Activated CD8-positive, alpha-beta T cell treated with anti-CD3 and anti-CD28 coated beads, Interleukin-2, amount 10 ng/mL, durations not matched to agents 7 days and 5 days (primary cell): ENCODE measurements at regions of chr1 and their contacts with region 1.

Region 1: GRCh38 chr1:39609618-39610331 is 29.7 kb downstream of the HEYL start:
- DNase-seq: peak; percentile 72
- ATAC-seq: peak; percentile 90
- H3K4me3 Mint-ChIP-seq: no peak overlapping the region
- H3K27ac Mint-ChIP-seq: no peak overlapping the region
- H3K4me1 Mint-ChIP-seq: peaks cover 8% of the 10 kb centered on the region
- H3K27me3 Mint-ChIP-seq: peaks cover 12% of the 10 kb centered on the region

Region 2: DNA sequence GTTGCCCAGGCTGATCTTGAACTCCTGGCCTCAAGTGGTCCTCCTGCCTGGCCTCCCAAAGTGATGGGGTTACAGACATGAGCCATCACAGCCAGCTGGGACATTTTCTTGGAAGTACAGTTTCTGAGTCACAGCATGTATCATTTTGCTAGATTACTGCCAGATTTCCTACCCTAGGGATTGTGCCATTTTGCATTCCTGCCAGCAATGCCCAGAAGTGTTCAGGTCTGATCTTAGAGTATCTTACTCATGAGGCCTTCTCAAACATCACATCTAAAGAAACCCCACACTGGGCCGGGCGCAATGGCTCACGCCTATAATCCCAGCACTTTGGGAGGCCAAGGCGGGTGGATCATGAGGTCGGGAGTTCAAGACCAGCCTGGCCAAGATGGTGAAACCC is 108.1 kb before region 1 on chr1:
- CTCF ChIA-PET with region 1: no interaction called
- POLR2A ChIA-PET with region 1: no interaction called
- DNase-seq: no peak
- ATAC-seq: no peak
- H3K4me3 Mint-ChIP-seq: no peak overlapping the region
- H3K27ac Mint-ChIP-seq: no peak overlapping the region
- H3K4me1 Mint-ChIP-seq: no peaks in the 10 kb centered on the region
- H3K27me3 Mint-ChIP-seq: peaks cover 20% of the 10 kb centered on the region

Region 3: GRCh38 chr1:39575191-39576015 is 34.4 kb before region 1 on chr1:
- CTCF ChIA-PET with region 1: interaction called, 17 read pairs
- POLR2A ChIA-PET with region 1: no interaction called
- DNase-seq: peak; percentile 63
- ATAC-seq: peak; percentile 36
- H3K4me3 Mint-ChIP-seq: peak overlapping the region; percentile 92
- H3K27ac Mint-ChIP-seq: peak overlapping the region; percentile 89
- H3K4me1 Mint-ChIP-seq: peaks cover 45% of the 10 kb centered on the region
- H3K27me3 Mint-ChIP-seq: no peaks in the 10 kb centered on the region

Region 4: GRCh38 chr1:39646232-39647081 is 36.7 kb after region 1 on chr1:
- CTCF ChIA-PET with region 1: interaction called, 295 read pairs
- POLR2A ChIA-PET with region 1: no interaction called
- DNase-seq: no peak
- ATAC-seq: no peak
- H3K4me3 Mint-ChIP-seq: no peak overlapping the region
- H3K27ac Mint-ChIP-seq: no peak overlapping the region
- H3K4me1 Mint-ChIP-seq: no peaks in the 10 kb centered on the region
- H3K27me3 Mint-ChIP-seq: peaks cover 7% of the 10 kb centered on the region

Region 5: GRCh38 chr1:39672551-39672947 is 62.8 kb after region 1 on chr1:
- CTCF ChIA-PET with region 1: interaction called, 35 read pairs
- POLR2A ChIA-PET with region 1: no interaction called
- DNase-seq: peak; percentile 35
- ATAC-seq: peak; percentile 23
- H3K4me3 Mint-ChIP-seq: peak overlapping the region; percentile 34
- H3K27ac Mint-ChIP-seq: no peak overlapping the region
- H3K4me1 Mint-ChIP-seq: peaks cover 11% of the 10 kb centered on the region
- H3K27me3 Mint-ChIP-seq: peaks cover 33% of the 10 kb centered on the region

Region 6: GRCh38 chr1:39720094-39720999 is 110.6 kb after region 1 on chr1:
- CTCF ChIA-PET with region 1: interaction called, 17 read pairs
- POLR2A ChIA-PET with region 1: no interaction called
- DNase-seq: no peak
- ATAC-seq: peak; percentile 67
- H3K4me3 Mint-ChIP-seq: no peak overlapping the region
- H3K27ac Mint-ChIP-seq: no peak overlapping the region
- H3K4me1 Mint-ChIP-seq: no peaks in the 10 kb centered on the region
- H3K27me3 Mint-ChIP-seq: peaks cover 53% of the 10 kb centered on the region

Region 7: DNA sequence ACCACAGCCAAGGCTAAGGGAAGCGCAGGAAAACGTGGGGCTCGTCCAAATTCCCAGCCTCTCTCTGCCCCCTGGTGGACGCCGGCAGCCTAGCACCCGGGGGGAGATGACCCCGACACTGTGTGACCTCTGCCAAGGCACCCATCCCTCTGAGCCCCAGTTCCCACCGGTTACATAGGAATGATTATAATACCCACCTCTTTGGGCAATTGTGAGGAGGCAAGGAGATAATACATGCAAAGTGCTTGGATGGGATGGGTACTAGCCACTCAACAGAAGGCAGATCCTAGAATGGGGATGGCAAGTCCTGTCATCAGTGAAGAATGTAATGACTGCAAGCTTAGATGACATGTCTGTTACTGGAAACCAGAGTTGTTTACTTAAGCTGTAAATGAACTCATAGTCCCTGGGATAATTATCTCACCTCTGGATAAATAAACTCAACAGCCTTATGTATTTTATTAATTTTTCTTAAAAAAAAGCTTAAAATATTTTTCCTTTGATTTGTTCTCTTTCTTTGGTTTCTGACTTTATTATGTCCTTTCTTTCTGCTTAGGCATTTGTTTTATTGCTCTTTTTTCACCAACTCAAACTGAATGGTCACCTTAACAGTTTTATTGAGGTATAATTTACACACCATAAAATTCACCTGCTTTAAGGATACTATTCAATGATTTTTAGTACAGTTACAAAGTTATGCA is 190.1 kb after region 1 on chr1:
- CTCF ChIA-PET with region 1: interaction called, 52 read pairs
- POLR2A ChIA-PET with region 1: no interaction called
- DNase-seq: peak; percentile 73
- ATAC-seq: peak; percentile 75
- H3K4me3 Mint-ChIP-seq: peak overlapping the region; percentile 49
- H3K27ac Mint-ChIP-seq: peak overlapping the region; percentile 82
- H3K4me1 Mint-ChIP-seq: peaks cover 11% of the 10 kb centered on the region
- H3K27me3 Mint-ChIP-seq: peaks cover 6% of the 10 kb centered on the region